ENCODE measurements at regions of chr20 and their contacts with region 1.

Region 1: DNA sequence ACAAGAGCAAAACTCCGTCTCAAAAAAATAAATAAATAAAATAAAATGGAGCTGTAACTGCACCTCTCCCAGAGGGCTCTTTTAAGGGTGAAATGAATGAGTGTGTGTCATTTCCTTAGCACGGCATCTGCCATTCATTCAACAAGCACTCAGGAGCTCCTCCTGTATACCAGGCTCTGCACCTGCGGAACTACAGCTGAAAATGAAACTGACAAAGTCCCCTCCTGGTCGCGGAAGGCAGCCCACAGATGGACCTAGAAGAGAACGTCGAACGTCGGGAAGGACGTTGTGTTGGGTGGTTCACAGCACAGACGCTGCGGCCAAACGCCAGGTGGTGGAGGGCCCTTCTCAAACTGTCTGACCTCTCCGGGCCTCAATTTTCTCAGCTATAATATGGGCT is 256.4 kb downstream of the TFAP2C start:
- DNase-seq: no peak
- H3K4me3 ChIP-seq: no peak overlapping the region
- H3K27ac ChIP-seq: no peak overlapping the region
- H3K4me1 ChIP-seq: no peaks in the 10 kb centered on the region
- H3K27me3 ChIP-seq: peaks cover 0 to 3% (median 0%) of the 10 kb centered on the region in 7 donors
- CTCF ChIP-seq: no peak
- POLR2A ChIP-seq: no peak

Region 2: GRCh38 chr20:56801744-56802670 is 83.5 kb before region 1 on chr20:
- intact Hi-C with region 1: loop called (anchors 10 kb)
- DNase-seq: no peak
- H3K4me3 ChIP-seq: no peak overlapping the region
- H3K27ac ChIP-seq: no peak overlapping the region
- H3K4me1 ChIP-seq: no peaks in the 10 kb centered on the region
- H3K27me3 ChIP-seq: peaks cover 0 to 22% (median 2%) of the 10 kb centered on the region in 7 donors
- CTCF ChIP-seq: no peak
- POLR2A ChIP-seq: no peak

Measured in spleen (tissue), 13 donors.